ENCODE measurements at regions of chr1 and their contacts with region 1.

Region 1: GRCh38 chr1:24744911-24745710 is at the start of gene CLIC4:
- DNase-seq: peak; percentile 100
- H3K4me3 ChIP-seq: peak within 1 kb of the TSS; percentile 82 to 98 (median 97)
- H3K27ac ChIP-seq: peak within 1 kb of the TSS; percentile 92
- H3K4me1 ChIP-seq: peaks cover 24% of the 10 kb centered on the region
- H3K27me3 ChIP-seq: no peaks in the 10 kb centered on the region
- CTCF ChIP-seq: peak in 1 of 2 donors; percentile 46
- total RNA-seq, gene CLIC4: 212 to 547 TPM

Region 2: DNA sequence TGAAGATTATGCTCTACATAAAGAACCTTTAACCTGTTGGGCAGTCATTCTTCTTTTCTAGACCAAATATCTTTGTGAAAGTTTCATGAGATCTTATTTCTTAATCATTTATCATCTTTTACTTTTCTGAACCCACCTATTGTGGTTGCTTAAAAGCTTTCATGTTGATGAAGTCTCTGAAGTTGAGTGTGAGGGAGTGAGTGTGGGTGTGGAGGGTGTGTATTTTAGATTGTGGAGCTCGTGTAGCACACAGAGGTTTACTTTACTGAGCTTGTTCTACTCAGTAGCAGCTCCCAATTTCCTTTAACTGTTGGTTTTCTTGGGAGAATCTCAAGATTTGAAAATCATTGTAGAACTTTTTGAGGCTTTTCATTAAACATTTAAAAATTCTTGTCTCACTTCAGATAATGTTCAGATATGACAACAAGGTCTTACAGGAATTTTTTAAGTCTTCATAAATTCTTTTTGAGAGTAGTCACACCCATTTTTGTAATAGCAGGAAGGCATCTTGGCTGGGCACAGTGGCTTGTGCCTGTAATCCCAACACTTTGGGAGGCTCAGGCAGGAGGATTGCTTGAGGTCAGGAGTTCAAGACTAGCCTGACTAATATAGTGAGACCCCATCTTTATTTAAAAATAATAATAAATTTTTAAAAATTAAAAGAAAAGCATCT is 85.0 kb before region 1 on chr1:
- CTCF ChIA-PET with region 1: no interaction called
- dilution Hi-C with region 1: no loop called
- in situ Hi-C with region 1: no loop called
- intact Hi-C with region 1: no loop called
- DNase-seq: no peak
- H3K4me3 ChIP-seq: no peak overlapping the region
- H3K27ac ChIP-seq: no peak overlapping the region
- H3K4me1 ChIP-seq: peaks cover 4% of the 10 kb centered on the region
- H3K27me3 ChIP-seq: no peaks in the 10 kb centered on the region
- CTCF ChIP-seq: no peak

Region 3: GRCh38 chr1:24688621-24689195 is 56.4 kb before region 1 on chr1:
- CTCF ChIA-PET with region 1: interaction called, 26 read pairs
- dilution Hi-C with region 1: no loop called
- in situ Hi-C with region 1: no loop called
- intact Hi-C with region 1: loop called (anchors 1 kb)
- DNase-seq: peak; percentile 62
- H3K4me3 ChIP-seq: no peak overlapping the region
- H3K27ac ChIP-seq: no peak overlapping the region
- H3K4me1 ChIP-seq: peaks cover 11% of the 10 kb centered on the region
- H3K27me3 ChIP-seq: no peaks in the 10 kb centered on the region
- CTCF ChIP-seq: peak; percentile 70 to 89

Region 4: GRCh38 chr1:24705260-24706073 is 39.6 kb before region 1 on chr1:
- CTCF ChIA-PET with region 1: no interaction called
- dilution Hi-C with region 1: loop called (anchors 5 kb)
- in situ Hi-C with region 1: no loop called
- intact Hi-C with region 1: loop called (anchors 1 kb)
- DNase-seq: peak; percentile 97
- H3K4me3 ChIP-seq: peak overlapping the region in 1 of 3 experiments; percentile 11
- H3K27ac ChIP-seq: peak overlapping the region; percentile 85
- H3K4me1 ChIP-seq: peaks cover 30% of the 10 kb centered on the region
- H3K27me3 ChIP-seq: no peaks in the 10 kb centered on the region
- CTCF ChIP-seq: no peak

Region 5: GRCh38 chr1:24714859-24715520 is 30.1 kb before region 1 on chr1:
- CTCF ChIA-PET with region 1: no interaction called
- dilution Hi-C with region 1: no loop called
- in situ Hi-C with region 1: no loop called
- intact Hi-C with region 1: loop called (anchors 1 kb)
- DNase-seq: peak; percentile 85
- H3K4me3 ChIP-seq: no peak overlapping the region
- H3K27ac ChIP-seq: peak overlapping the region; percentile 62
- H3K4me1 ChIP-seq: peaks cover 42% of the 10 kb centered on the region
- H3K27me3 ChIP-seq: no peaks in the 10 kb centered on the region
- CTCF ChIP-seq: no peak

Region 6: DNA sequence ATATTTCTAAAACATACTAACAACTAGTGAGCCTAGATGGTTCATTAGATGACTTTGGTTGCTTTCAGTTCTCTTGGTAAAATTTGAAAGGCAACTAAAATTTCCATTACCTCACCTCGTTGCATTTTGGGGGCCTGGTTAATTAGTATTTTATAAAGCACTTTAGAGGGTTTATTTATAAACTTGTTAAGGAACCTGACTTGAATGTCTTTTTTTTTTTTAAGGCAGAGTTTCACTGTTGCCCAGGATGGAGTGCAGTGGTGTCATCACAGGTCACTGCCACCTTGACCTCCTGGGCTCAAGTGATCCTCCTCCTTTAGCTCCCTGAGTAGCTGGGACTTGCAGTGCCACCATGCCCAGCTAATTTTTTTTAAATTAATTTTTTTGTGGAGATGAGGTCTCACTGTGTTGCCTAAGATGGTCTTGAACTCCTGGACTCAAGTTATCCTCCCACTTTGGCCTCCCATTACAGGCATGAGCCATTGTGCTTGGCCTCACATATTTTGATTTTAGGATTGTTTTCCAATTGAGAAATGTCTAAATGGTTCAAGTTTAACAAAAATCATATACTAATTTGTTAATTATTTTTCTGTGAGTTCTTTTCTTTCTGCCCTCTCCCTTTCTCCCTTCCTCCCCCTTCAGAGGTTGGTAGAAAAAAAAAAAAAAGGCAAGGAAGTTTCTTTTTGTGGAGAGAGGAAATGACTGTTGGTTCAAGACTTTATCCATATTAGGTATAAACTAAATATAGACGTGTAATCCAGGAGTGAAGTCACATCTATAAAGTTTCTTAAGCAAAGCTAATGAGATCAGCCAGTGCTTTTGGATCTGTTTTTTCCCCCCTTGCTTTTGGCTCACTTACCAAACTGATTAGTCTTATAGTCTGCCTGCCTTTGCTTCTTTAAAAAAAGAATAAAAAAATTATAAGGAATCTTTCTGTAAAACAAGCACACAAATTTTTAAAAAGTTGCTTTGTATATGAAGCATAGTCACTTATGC is 24.8 kb after region 1 on chr1:
- CTCF ChIA-PET with region 1: no interaction called
- dilution Hi-C with region 1: no loop called
- in situ Hi-C with region 1: no loop called
- intact Hi-C with region 1: loop called (anchors 1 kb)
- DNase-seq: peak; percentile 84
- H3K4me3 ChIP-seq: no peak overlapping the region
- H3K27ac ChIP-seq: peak overlapping the region; percentile 68
- H3K4me1 ChIP-seq: peaks cover 25% of the 10 kb centered on the region
- H3K27me3 ChIP-seq: no peaks in the 10 kb centered on the region
- CTCF ChIP-seq: no peak

Region 7: DNA sequence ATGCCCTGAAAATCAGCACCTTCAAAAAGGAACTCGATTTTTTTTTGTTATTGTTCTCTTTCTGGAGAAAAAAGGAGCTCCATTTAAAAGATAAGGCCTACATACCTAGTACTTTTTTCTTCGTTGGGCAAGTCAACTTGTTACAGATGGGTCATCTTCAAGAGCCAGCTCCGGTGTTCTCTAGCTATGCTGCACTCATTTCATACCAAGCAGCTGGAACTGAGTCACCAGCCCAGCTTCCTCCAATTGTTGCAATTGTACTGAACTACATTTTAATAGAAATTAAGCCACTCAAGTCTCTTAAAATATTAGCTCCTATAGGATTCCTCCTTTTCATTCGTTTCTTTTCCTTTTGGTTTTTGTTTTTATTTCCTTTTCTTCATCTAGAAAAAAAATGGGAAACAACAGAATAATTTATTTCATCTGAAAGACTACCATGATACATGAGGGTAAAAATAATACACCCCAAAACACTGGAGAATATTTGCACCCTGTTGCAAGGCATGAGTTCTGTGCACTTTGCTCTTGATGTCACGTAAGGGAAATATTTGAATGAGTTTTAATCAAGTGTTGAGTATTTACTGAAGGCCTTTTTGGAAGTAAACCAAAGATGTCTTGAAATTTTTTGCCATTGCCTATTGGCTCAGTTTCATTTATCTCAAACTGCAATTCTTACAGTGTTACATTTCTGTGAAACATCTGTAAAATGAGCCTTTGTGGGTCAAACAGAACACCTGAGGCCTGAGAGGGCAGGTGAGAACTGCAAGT is 60.6 kb after region 1 on chr1:
- CTCF ChIA-PET with region 1: no interaction called
- dilution Hi-C with region 1: no loop called
- in situ Hi-C with region 1: no loop called
- intact Hi-C with region 1: loop called (anchors 10 kb)
- DNase-seq: peak; percentile 74
- H3K4me3 ChIP-seq: no peak overlapping the region
- H3K27ac ChIP-seq: no peak overlapping the region
- H3K4me1 ChIP-seq: peaks cover 12% of the 10 kb centered on the region
- H3K27me3 ChIP-seq: no peaks in the 10 kb centered on the region
- CTCF ChIP-seq: no peak

Region 8: GRCh38 chr1:24830680-24831272 is 85.7 kb after region 1 on chr1:
- CTCF ChIA-PET with region 1: no interaction called
- dilution Hi-C with region 1: no loop called
- in situ Hi-C with region 1: no loop called
- intact Hi-C with region 1: loop called (anchors 2 kb)
- DNase-seq: peak; percentile 55
- H3K4me3 ChIP-seq: no peak overlapping the region
- H3K27ac ChIP-seq: no peak overlapping the region
- H3K4me1 ChIP-seq: peaks cover 3% of the 10 kb centered on the region
- H3K27me3 ChIP-seq: no peaks in the 10 kb centered on the region
- CTCF ChIP-seq: peak; percentile 72 to 83

Measured in mammary epithelial cell (primary cell).